Cardiac septum (tissue), 1 donor: ENCODE measurements at regions of chr7 and their contacts with region 1.

Region 1: GRCh38 chr7:21253740-21254687 is 173.9 kb upstream of the SP4 start:
- DNase-seq: no peak

Region 2: DNA sequence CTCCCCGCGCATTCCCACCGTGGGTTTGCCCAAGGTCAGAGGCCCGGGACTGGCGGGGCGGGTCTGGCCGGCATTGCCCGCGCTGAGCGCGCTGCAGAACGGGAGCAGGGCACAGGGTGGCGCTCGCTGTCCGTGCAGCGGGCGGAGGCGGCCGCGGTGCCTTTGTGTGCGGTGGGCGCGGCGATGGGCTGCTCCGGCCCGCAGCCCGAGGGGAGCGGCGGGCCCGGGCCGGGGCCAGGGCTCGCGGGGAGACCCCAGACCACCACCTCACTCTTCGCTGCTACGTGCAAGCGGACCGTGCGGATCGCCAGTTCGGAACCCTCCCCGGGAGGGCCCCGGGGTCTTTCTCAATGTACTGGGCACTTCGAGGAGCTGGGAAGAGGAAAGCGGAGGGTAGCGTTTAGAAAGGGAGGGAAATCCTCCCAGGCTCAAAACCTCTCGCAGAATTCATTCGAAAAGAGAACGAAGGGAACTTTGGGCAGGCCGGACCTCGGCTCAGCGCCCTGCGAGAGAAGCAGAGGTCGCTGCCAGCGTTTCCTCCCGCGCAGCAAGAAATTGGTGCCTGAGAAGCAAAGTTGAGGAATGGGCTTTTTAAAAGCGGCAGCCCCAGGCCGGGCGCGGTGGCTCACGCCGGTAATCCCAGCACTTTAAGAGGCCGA is 475.8 kb before region 1 on chr7:
- intact Hi-C with region 1: loop called (anchors 5 kb)
- DNase-seq: no peak

Region 3: DNA sequence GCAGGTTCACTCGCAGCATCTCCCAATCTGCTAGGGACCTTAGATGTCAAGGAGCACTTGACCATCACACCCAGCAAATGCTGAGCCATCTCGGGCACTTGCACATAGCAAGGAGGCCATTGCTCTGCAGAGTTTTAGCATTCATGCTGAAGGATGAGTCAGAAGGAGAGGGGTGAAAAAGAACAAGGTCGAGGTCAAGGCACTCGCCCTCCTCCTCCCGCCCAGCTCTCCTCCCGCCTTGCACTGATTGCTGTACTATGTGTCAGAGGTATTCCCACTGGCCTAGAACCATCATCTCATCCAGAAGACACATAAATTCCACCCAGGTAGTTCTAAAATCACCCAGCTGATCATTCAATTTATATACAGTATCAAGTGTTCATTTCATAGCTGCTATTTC is 81.2 kb before region 1 on chr7:
- intact Hi-C with region 1: no loop called
- DNase-seq: no peak

Region 4: DNA sequence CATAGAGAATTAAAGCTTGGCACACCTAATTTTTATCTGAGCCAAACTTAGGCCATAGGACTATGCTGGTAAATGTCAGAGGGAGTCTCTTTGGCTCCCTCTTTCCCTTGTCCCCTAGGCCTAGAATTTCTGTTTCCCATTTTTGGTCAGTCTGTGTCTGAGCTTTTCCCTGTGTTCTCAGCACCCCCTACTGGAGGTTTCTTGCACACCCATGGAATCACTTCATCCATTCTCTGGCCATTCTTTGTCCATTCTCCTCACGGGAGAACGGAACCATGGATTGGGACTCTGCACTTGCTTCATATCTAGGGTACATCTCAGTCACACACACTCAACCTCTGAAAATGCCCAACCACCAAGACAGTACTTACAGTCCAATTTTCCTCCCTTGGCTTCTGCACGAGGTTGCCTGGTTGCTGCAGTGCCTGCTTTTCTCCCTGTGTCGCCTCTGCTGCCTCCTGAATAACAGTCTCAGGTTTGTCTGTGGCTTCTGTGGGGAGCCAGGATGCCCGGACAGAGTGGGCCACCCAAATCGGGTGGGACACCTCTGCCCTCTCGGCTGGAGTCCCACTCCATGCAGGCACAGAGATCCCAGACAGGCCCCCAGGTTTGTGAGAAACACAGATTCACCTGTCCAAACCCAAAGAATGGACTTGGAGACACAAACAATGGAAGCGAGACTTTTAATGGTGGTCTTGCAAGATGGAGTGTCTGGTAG is 253.8 kb after region 1 on chr7:
- intact Hi-C with region 1: loop called (anchors 2 kb)
- DNase-seq: no peak

Region 5: GRCh38 chr7:21767300-21767900 is 513.4 kb after region 1 on chr7:
- intact Hi-C with region 1: loop called (anchors 10 kb)
- DNase-seq: no peak